Sigmoid colon (tissue), 7 donors: ENCODE measurements at regions of chr4 and their contacts with region 1.

Region 1: DNA sequence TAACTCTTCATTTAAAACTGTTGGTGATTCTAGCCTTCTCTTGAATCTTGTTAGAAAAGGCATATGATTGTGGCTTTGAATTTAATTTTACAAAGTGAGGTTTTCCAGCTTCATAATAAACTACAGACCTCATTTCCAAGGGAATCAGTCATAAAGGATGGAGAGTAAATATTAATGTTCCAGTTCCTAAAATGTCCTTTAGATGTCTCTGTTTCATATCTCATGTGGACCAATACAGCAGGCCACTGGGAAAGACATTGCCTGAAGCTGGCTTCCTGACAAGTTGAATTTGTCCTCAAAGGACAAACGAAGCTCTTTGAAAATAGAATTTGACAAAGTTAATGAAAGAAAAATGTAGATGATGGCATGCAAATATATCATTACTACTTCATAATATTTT is 125.4 kb downstream of the ZNF330 start:
- DNase-seq: no peak
- H3K4me3 ChIP-seq: no peak overlapping the region
- H3K27ac ChIP-seq: peak overlapping the region in 1 of 4 donors; percentile 22
- H3K4me1 ChIP-seq: peaks cover 0 to 43% (median 27%) of the 10 kb centered on the region in 4 donors
- H3K27me3 ChIP-seq: no peaks in the 10 kb centered on the region
- CTCF ChIP-seq: peak in 3 of 4 experiments; percentile 51 to 65 (median 53)
- EP300 ChIP-seq: peak in 1 of 4 donors; percentile 12
- POLR2A ChIP-seq: no peak

Region 2: GRCh38 chr4:141117935-141118334 is 228.2 kb before region 1 on chr4:
- intact Hi-C with region 1: no loop called
- DNase-seq: no peak
- H3K4me3 ChIP-seq: no peak overlapping the region
- H3K27ac ChIP-seq: no peak overlapping the region
- H3K4me1 ChIP-seq: peaks cover 0 to 41% (median 22%) of the 10 kb centered on the region in 4 donors
- H3K27me3 ChIP-seq: no peaks in the 10 kb centered on the region
- CTCF ChIP-seq: no peak
- EP300 ChIP-seq: no peak
- POLR2A ChIP-seq: no peak

Region 3: DNA sequence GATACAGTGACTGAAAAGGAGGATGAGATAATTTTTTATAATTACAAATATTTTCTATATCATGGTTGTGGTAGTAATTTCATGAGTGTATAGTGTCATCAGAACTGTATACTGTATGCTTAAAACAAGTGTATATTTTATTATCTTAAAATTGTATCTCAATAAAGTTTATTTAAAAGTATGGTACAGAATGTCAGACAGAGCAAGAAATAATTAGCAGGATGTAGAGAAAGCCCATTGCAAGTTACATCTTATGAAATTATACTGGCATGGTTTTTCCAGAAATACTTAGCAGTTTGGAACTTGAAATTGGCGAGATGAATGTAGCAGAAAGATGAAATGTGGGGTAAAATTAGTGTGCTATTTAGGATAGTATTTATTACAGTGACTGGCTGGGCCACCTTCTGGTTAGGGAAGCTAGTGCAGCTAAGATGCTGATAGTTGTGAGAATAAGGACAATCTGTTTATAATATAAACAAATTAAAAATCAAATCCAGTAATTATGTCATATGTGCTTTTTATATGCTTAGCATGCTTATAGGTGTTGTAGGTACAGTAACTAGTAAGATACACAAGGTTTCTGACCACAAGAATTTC is 365.0 kb after region 1 on chr4:
- intact Hi-C with region 1: loop called (anchors 5 kb)
- DNase-seq: no peak
- H3K4me3 ChIP-seq: no peak overlapping the region
- H3K27ac ChIP-seq: no peak overlapping the region
- H3K4me1 ChIP-seq: no peaks in the 10 kb centered on the region
- H3K27me3 ChIP-seq: no peaks in the 10 kb centered on the region
- CTCF ChIP-seq: peak in 3 of 4 experiments; percentile 37 to 55 (median 42)
- EP300 ChIP-seq: no peak
- POLR2A ChIP-seq: no peak

Region 4: GRCh38 chr4:142095886-142096605 is 749.9 kb after region 1 on chr4:
- intact Hi-C with region 1: loop called (anchors 10 kb)
- DNase-seq: peak; percentile 75
- H3K4me3 ChIP-seq: no peak overlapping the region
- H3K27ac ChIP-seq: peak overlapping the region in 3 of 4 donors; percentile 28 to 66 (median 66)
- H3K4me1 ChIP-seq: peaks cover 0 to 47% (median 14%) of the 10 kb centered on the region in 4 donors
- H3K27me3 ChIP-seq: no peaks in the 10 kb centered on the region
- CTCF ChIP-seq: no peak
- EP300 ChIP-seq: peak in 3 of 4 donors; percentile 62 to 80 (median 80)
- POLR2A ChIP-seq: no peak